ENCODE measurements at regions of chr4 and their contacts with region 1.

Region 1: GRCh38 chr4:71732706-71733105 is 51.2 kb downstream of the GC start:
- DNase-seq: no peak
- H3K4me3 Mint-ChIP-seq: no peak overlapping the region
- H3K27ac Mint-ChIP-seq: no peak overlapping the region
- H3K4me1 Mint-ChIP-seq: no peaks in the 10 kb centered on the region
- H3K27me3 Mint-ChIP-seq: no peaks in the 10 kb centered on the region
- CTCF ChIP-seq: peak; percentile 24

Region 2: GRCh38 chr4:72286185-72286584 is 553.5 kb after region 1 on chr4:
- CTCF ChIA-PET with region 1: interaction called, 4 read pairs
- intact Hi-C with region 1: loop called (anchors 2 kb)
- DNase-seq: no peak
- H3K4me3 Mint-ChIP-seq: no peak overlapping the region
- H3K27ac Mint-ChIP-seq: no peak overlapping the region
- H3K4me1 Mint-ChIP-seq: peaks cover 8% of the 10 kb centered on the region
- H3K27me3 Mint-ChIP-seq: no peaks in the 10 kb centered on the region
- CTCF ChIP-seq: no peak

Region 3: DNA sequence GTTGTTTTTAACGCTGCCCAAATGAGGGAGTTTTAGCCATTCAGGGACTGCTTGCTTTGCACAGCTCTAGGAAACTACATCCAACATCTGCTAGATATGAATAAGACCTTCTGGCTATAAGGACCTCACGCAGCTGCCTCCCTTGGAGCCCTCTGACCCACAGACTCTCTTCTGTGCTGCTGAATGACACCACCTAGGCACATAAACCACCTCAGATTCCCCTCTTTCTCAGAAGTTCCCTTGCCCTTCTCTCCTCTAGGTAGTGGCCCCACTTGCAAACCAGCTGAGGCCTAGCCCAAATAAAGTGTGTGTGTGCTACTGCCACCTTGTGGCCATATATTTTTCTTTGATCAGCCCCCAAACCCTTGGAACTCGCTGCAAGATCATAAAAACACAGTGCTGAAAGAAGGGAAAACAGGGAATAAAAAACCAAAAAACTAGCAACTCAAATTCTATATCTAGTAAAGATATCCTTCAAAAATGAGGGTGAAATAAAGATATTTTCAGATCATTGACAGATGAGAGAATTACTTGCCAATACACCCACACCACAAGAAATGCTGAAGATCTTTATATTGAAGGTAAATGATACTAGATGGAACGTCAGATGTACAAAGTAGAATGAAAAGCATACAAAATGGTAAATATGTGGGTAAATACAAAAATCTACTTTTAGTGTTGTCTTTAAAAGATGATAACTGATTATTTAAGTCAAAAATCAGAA is 570.4 kb after region 1 on chr4:
- CTCF ChIA-PET with region 1: no interaction called
- intact Hi-C with region 1: loop called (anchors 1 kb)
- DNase-seq: peak; percentile 48
- H3K4me3 Mint-ChIP-seq: no peak overlapping the region
- H3K27ac Mint-ChIP-seq: no peak overlapping the region
- H3K4me1 Mint-ChIP-seq: no peaks in the 10 kb centered on the region
- H3K27me3 Mint-ChIP-seq: no peaks in the 10 kb centered on the region
- CTCF ChIP-seq: peak; percentile 19